Colonic mucosa (tissue), 4 donors: ENCODE measurements at regions of chr5 and their contacts with region 1.

Region 1: GRCh38 chr5:55982957-55983381 is 11.8 kb downstream of the IL6ST start:
- DNase-seq: peak; percentile 45
- H3K4me3 ChIP-seq: no peak overlapping the region
- H3K27ac ChIP-seq: peak overlapping the region; percentile 15
- H3K4me1 ChIP-seq: peaks cover 3% of the 10 kb centered on the region
- H3K27me3 ChIP-seq: no peaks in the 10 kb centered on the region
- CTCF ChIP-seq: no peak

Region 2: GRCh38 chr5:55841976-55842375 is 141.0 kb before region 1 on chr5:
- intact Hi-C with region 1: no loop called
- DNase-seq: no peak
- H3K4me3 ChIP-seq: no peak overlapping the region
- H3K27ac ChIP-seq: no peak overlapping the region
- H3K4me1 ChIP-seq: no peaks in the 10 kb centered on the region
- H3K27me3 ChIP-seq: no peaks in the 10 kb centered on the region
- CTCF ChIP-seq: no peak

Region 3: DNA sequence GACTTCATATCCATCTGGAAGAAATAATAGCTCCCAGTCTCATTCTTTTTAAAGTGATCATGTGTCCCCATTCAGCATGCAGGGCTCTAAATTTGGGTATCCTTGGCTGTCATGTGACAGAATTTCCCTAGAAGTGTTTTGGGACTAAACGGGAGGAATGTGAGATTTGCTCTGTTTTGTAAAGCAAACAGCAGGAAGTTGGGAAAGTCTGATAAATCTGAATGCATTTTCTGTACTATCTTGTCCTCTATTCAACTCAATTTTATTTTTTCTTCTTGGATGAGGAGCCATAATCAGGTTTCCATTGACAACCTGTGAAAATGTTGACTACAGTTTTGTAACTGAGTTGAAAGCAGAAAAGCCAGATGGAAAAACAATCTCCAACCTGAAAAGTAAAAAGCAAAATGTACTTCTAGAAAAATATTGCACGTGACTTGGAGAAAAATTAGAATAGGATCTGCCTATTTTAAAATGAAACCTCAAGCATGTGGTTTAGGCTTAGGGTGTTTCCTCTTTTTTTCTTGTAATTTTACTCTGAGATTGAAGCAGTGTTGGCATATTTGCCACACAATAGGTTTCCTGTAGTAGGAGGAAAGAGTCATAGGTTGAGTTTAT is 88.0 kb after region 1 on chr5:
- intact Hi-C with region 1: loop called (anchors 5 kb)
- DNase-seq: no peak
- H3K4me3 ChIP-seq: no peak overlapping the region
- H3K27ac ChIP-seq: peak overlapping the region; percentile 5
- H3K4me1 ChIP-seq: no peaks in the 10 kb centered on the region
- H3K27me3 ChIP-seq: no peaks in the 10 kb centered on the region
- CTCF ChIP-seq: no peak